ENCODE measurements at regions of chr11 and their contacts with region 1.

Region 1: GRCh38 chr11:114180301-114181055 is 115.7 kb upstream of the NNMT start:
- DNase-seq: no peak
- H3K4me3 ChIP-seq: no peak overlapping the region
- H3K4me3 Mint-ChIP-seq: peak overlapping the region in 6 of 8 donors; percentile 17 to 60 (median 42)
- H3K27ac ChIP-seq: no peak overlapping the region
- H3K27ac Mint-ChIP-seq: peak overlapping the region in 3 of 7 donors; percentile 53 to 90 (median 79)
- H3K4me1 ChIP-seq: peaks cover 70% of the 10 kb centered on the region
- H3K4me1 Mint-ChIP-seq: peaks cover 60 to 92% (median 77%) of the 10 kb centered on the region in 4 donors
- H3K27me3 ChIP-seq: no peaks in the 10 kb centered on the region
- H3K27me3 Mint-ChIP-seq: no peaks in the 10 kb centered on the region

Region 2: GRCh38 chr11:114059278-114059983 is 121.0 kb before region 1 on chr11 and contains the start of gene ZBTB16:
- CTCF ChIA-PET with region 1: interaction called, 24 read pairs
- POLR2A ChIA-PET with region 1: interaction called, 11 read pairs
- intact Hi-C with region 1: no loop called
- DNase-seq: peak; percentile 59 to 76 (median 67)
- H3K4me3 ChIP-seq: peak within 1 kb of the TSS; percentile 52 to 57
- H3K4me3 Mint-ChIP-seq: peak within 1 kb of the TSS; percentile 87 to 97 (median 92)
- H3K27ac ChIP-seq: peak within 1 kb of the TSS; percentile 43
- H3K27ac Mint-ChIP-seq: peak within 1 kb of the TSS; percentile 55 to 91 (median 85)
- H3K4me1 ChIP-seq: peaks cover 17% of the 10 kb centered on the region
- H3K4me1 Mint-ChIP-seq: peaks cover 5 to 34% (median 16%) of the 10 kb centered on the region in 4 donors
- H3K27me3 ChIP-seq: peaks cover 16% of the 10 kb centered on the region
- H3K27me3 Mint-ChIP-seq: peaks cover 1 to 8% of the 10 kb centered on the region in 2 donors
- total RNA-seq, gene ZBTB16: 5.6 to 8.2 TPM

Region 3: DNA sequence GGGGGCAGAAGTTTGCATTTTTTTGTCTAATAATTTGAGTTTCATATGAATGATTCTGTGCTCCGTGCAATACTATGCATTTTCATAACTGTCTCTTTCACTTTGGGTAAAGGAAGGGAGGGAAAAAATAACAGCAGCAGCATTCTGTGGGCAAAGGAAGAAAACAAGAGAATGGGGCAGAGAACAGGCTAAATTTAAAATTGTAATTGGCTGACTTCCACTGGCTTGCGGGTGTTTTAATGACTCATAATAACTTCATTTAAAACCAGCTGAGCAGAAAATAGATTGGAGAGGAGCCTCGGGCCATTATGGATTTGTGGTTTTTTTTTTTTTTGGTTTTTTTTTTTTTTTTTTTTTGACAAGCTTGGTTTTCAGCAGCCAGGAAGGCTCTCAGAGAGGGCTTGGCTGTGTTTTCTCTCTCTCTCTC is 13.6 kb before region 1 on chr11:
- CTCF ChIA-PET with region 1: interaction called, 106 read pairs
- POLR2A ChIA-PET with region 1: interaction called, 222 read pairs
- intact Hi-C with region 1: no loop called
- DNase-seq: peak; percentile 47 to 68 (median 64)
- H3K4me3 ChIP-seq: no peak overlapping the region
- H3K4me3 Mint-ChIP-seq: peak overlapping the region; percentile 21 to 83 (median 66)
- H3K27ac ChIP-seq: no peak overlapping the region
- H3K27ac Mint-ChIP-seq: peak overlapping the region; percentile 15 to 92 (median 81)
- H3K4me1 ChIP-seq: peaks cover 86% of the 10 kb centered on the region
- H3K4me1 Mint-ChIP-seq: peaks cover 57 to 100% (median 85%) of the 10 kb centered on the region in 4 donors
- H3K27me3 ChIP-seq: no peaks in the 10 kb centered on the region
- H3K27me3 Mint-ChIP-seq: no peaks in the 10 kb centered on the region

Region 4: DNA sequence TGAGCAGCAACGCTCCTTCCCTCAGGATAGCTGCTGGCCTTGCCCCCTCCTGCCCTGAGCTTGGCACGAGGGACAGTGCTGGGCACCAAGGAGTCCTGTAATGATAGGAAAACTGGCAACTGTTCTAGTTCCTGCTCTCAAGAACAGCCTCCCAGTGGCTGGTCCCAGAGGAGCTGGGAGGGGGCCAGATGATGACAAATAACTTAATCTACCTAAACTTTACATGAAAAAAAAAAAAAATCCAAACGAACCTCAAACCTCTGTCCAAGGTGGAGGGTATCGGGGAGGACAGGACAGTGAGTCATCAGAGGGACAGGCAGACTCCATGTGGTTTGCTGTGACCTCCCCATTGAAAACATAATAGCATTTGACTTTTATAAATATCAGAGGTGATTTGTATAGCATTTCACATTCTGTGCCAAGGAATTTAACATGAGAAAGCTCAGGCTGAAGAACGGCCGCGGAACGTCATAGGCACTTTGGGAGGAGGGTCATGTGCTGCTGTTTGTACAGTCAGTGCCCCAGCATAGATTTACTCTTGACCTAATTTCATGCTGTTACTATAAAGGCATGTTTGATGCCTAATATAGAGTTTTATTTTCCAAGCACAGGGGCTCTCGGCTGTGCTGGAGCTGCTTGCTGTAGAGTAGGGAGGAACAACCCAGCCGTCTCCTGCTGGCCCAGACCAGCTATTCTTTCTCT is 17.5 kb after region 1 on chr11:
- CTCF ChIA-PET with region 1: interaction called, 72 read pairs
- POLR2A ChIA-PET with region 1: interaction called, 33 read pairs
- intact Hi-C with region 1: no loop called
- DNase-seq: no peak
- H3K4me3 ChIP-seq: no peak overlapping the region
- H3K4me3 Mint-ChIP-seq: no peak overlapping the region
- H3K27ac ChIP-seq: no peak overlapping the region
- H3K27ac Mint-ChIP-seq: peak overlapping the region in 1 of 7 donors; percentile 66
- H3K4me1 ChIP-seq: peaks cover 8% of the 10 kb centered on the region
- H3K4me1 Mint-ChIP-seq: peaks cover 5 to 21% (median 14%) of the 10 kb centered on the region in 4 donors
- H3K27me3 ChIP-seq: no peaks in the 10 kb centered on the region
- H3K27me3 Mint-ChIP-seq: no peaks in the 10 kb centered on the region

Region 5: DNA sequence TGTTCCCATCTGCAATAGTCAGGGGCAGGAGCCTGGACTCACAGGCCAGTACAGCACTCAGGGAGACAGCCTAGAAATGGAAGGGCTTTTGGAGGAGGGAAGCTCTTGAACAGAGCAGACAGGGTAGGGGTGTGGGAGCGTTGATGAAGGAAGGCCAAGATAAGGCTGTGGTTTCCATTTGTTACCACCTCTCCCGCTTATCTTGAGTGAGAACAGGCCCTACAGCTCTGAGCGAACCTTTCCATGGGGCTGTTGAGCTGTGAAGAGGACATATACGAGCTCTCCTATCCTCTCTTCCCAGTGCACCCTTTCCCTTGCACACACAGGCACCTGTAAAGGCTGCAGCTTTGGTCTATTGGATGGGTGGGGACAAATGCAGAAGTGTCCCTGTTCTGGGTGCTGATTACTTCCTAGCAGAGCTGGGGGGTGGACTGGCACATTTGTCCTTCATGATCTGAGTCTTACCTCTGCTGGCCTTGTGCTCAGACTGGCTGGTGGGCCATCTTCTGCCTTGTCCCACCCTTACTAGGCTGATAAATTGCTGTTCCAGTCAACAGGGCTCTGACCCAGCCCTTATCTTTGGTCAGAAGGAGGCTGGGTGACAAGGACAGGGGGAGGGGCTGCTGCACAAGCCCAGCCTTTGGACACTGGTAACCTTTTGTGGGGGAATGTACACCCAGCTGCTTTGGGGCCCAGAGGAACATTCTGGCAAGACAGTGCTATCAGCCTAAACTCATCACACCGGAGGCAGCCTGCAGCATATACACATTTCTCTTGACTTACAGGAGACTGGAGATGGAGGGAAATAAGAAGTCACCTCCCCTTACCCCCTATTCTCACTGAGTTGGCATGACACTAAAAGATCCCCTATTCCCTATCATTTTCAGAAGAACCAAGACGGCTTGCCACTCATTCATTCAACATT is 35.7 kb after region 1 on chr11:
- CTCF ChIA-PET with region 1: interaction called, 3 read pairs
- POLR2A ChIA-PET with region 1: interaction called, 11 read pairs
- intact Hi-C with region 1: no loop called
- DNase-seq: no peak
- H3K4me3 ChIP-seq: peak overlapping the region in 1 of 2 donors; percentile 26
- H3K4me3 Mint-ChIP-seq: peak overlapping the region in 7 of 8 donors; percentile 53 to 76 (median 65)
- H3K27ac ChIP-seq: no peak overlapping the region
- H3K27ac Mint-ChIP-seq: peak overlapping the region; percentile 14 to 70 (median 53)
- H3K4me1 ChIP-seq: peaks cover 35% of the 10 kb centered on the region
- H3K4me1 Mint-ChIP-seq: peaks cover 32 to 48% (median 39%) of the 10 kb centered on the region in 4 donors
- H3K27me3 ChIP-seq: no peaks in the 10 kb centered on the region
- H3K27me3 Mint-ChIP-seq: no peaks in the 10 kb centered on the region

Region 6: DNA sequence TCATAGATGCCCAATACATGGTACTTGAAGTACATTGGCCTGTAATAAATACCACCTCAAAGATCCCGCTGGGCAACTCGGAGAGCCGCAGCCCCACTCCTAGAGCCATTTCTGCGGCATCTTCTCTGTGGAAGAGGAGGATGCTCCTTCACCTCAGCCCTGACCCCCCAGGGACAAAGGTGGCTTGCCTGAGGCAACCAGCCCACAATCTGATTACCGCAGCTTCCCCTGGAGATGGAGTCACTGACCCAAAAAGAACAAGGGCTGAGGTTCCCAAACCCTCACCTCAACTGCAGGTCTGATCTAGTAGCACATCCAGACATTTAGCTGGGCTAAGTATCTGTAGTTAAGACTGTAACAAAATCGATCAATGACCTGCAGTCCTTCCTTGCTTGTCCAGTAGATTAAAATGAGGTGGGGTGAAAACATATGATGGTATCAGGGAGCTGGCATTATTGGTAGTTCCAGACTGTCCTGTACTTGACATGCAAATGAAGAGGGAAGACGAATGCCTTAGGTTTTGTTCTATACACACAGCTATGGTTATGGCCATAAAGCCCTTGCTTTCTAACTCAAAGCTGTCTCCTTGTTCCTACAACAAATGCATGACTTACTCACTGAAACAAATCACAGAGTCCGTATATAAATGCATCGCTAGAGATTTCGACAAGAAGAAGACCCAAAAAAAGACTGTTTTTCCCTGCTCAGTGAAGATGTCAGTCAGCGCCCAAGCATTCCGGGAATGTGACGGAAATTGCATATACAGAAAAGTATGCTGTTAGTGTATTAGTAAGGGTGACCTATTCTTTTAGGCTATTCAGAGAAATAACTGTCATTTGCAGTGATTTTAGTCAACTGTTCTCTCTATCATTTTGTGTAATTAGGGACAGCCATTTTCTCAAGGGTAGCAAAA is 186.1 kb after region 1 on chr11:
- CTCF ChIA-PET with region 1: no interaction called
- POLR2A ChIA-PET with region 1: no interaction called
- intact Hi-C with region 1: no loop called
- DNase-seq: no peak
- H3K4me3 ChIP-seq: no peak overlapping the region
- H3K4me3 Mint-ChIP-seq: no peak overlapping the region
- H3K27ac ChIP-seq: no peak overlapping the region
- H3K27ac Mint-ChIP-seq: no peak overlapping the region
- H3K4me1 ChIP-seq: no peaks in the 10 kb centered on the region
- H3K4me1 Mint-ChIP-seq: no peaks in the 10 kb centered on the region
- H3K27me3 ChIP-seq: no peaks in the 10 kb centered on the region
- H3K27me3 Mint-ChIP-seq: peaks cover 14 to 25% of the 10 kb centered on the region in 2 donors